CD4-positive, alpha-beta memory T cell (primary cell): ENCODE measurements at regions of chr16 and their contacts with region 1.

Region 1: GRCh38 chr16:228818-229730 is at the start of gene LUC7L:
- DNase-seq: peak; percentile 82 to 89 (median 85)
- H3K4me3 ChIP-seq: peak within 1 kb of the TSS; percentile 48 to 84
- H3K4me3 Mint-ChIP-seq: peak within 1 kb of the TSS; percentile 86 to 96 (median 90)
- H3K27ac ChIP-seq: peak within 1 kb of the TSS; percentile 97
- H3K27ac Mint-ChIP-seq: peak within 1 kb of the TSS; percentile 91 to 98 (median 96)
- H3K4me1 ChIP-seq: peaks cover 23% of the 10 kb centered on the region
- H3K4me1 Mint-ChIP-seq: peaks cover 15 to 41% (median 33%) of the 10 kb centered on the region in 4 donors
- H3K27me3 ChIP-seq: no peaks in the 10 kb centered on the region
- H3K27me3 Mint-ChIP-seq: no peaks in the 10 kb centered on the region
- total RNA-seq, gene LUC7L: 147 to 157 TPM

Region 2: GRCh38 chr16:252366-253337 is 23.6 kb after region 1 on chr16:
- CTCF ChIA-PET with region 1: interaction called, 3 read pairs
- POLR2A ChIA-PET with region 1: interaction called, 13 read pairs
- intact Hi-C with region 1: loop called (anchors 2 kb)
- DNase-seq: peak; percentile 31 to 42 (median 34)
- H3K4me3 ChIP-seq: peak overlapping the region; percentile 44 to 61
- H3K4me3 Mint-ChIP-seq: peak overlapping the region; percentile 78 to 92 (median 83)
- H3K27ac ChIP-seq: peak overlapping the region; percentile 51
- H3K27ac Mint-ChIP-seq: peak overlapping the region; percentile 69 to 96 (median 94)
- H3K4me1 ChIP-seq: peaks cover 22% of the 10 kb centered on the region
- H3K4me1 Mint-ChIP-seq: peaks cover 19 to 43% (median 29%) of the 10 kb centered on the region in 4 donors
- H3K27me3 ChIP-seq: no peaks in the 10 kb centered on the region
- H3K27me3 Mint-ChIP-seq: no peaks in the 10 kb centered on the region